ENCODE measurements at regions of chr1 and their contacts with region 1.

Region 1: DNA sequence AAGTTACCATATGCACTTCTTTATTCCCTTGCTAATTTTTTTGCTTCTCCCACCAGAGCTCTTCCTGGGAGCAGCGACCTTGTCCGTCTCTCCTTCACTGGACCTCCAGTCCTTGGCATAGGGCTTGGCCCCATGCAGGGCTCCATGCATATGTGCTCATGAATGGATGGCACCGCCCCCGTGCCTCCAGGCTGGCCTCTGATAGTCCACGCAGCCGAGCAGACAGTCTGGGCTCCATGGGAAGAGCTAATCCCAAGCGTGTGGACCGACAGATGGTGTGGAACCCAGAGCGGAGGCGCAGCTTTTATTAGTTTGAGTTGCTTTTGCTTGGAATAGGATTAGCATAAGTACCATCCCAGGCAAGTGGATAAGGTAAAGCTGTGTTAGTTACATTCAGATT is 41.8 kb downstream of the CDCP2 start:
- DNase-seq: no peak

Region 2: GRCh38 chr1:54121482-54122134 is 10.6 kb after region 1 on chr1:
- CTCF ChIA-PET with region 1: interaction called, 12 read pairs
- POLR2A ChIA-PET with region 1: no interaction called
- DNase-seq: peak; percentile 96

Region 3: GRCh38 chr1:54153548-54154439 is 42.8 kb after region 1 on chr1:
- CTCF ChIA-PET with region 1: no interaction called
- POLR2A ChIA-PET with region 1: no interaction called
- DNase-seq: peak; percentile 48

Measured in HEK293T (cell line).